ENCODE measurements at regions of chr1 and their contacts with region 1.

Region 1: DNA sequence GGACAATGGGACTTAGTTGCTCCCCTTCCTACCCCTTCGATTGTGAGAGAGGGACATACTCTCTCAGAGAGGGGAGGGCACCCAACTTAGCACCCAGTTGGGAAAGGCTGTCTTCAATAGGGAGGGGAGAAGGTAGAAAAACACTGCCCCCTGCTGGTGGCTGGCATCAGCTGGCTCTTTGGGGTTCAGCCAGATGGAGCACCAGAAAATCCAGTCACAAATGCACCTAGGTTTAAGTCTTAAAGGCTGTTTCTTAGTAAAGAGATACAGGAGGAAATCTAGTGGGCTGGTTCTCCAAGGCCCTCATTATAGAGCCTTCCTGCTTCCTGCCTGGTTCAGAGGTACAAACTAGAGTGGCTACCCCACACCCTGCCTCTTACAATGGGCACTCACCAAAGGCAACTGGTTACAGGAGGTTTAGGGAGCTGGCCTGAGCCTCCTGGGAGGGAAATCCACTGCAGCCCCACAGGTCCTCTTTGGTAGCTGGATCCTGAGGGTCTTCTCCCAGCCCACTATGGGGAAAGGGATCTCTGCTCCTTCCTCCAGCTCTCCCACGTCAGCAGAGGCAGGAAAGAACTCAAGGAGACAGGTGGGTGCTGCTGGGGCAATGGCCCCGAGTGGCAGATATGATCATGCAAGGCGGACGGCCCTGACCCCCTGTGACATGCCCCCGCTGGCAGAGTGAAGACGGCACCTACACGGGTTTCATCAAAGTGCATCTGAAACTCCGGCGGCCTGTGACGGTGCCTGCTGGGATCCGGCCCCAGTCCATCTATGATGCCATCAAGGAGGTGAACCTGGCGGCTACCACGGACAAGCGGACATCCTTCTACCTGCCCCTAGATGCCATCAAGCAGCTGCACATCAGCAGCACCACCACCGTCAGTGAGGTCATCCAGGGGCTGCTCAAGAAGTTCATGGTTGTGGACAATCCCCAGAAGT is 28.3 kb downstream of the EIF2D start:
- DNase-seq: peak; percentile 67
- ATAC-seq: no peak
- H3K4me3 Mint-ChIP-seq: peak overlapping the region; percentile 54
- H3K27ac Mint-ChIP-seq: peak overlapping the region; percentile 96
- H3K4me1 Mint-ChIP-seq: peaks cover 48% of the 10 kb centered on the region
- H3K27me3 Mint-ChIP-seq: no peaks in the 10 kb centered on the region
- CTCF ChIP-seq: peak; percentile 46

Region 2: GRCh38 chr1:206050655-206051235 is 533.2 kb before region 1 on chr1:
- CTCF ChIA-PET with region 1: no interaction called
- POLR2A ChIA-PET with region 1: no interaction called
- intact Hi-C with region 1: loop called (anchors 5 kb)
- DNase-seq: peak; percentile 71
- ATAC-seq: peak; percentile 86
- H3K4me3 Mint-ChIP-seq: peak overlapping the region; percentile 58
- H3K27ac Mint-ChIP-seq: peak overlapping the region; percentile 95
- H3K4me1 Mint-ChIP-seq: peaks cover 94% of the 10 kb centered on the region
- H3K27me3 Mint-ChIP-seq: no peaks in the 10 kb centered on the region
- CTCF ChIP-seq: no peak

Region 3: GRCh38 chr1:206479183-206480125 is 104.5 kb before region 1 on chr1:
- CTCF ChIA-PET with region 1: interaction called, 84 read pairs
- POLR2A ChIA-PET with region 1: interaction called, 3 read pairs
- intact Hi-C with region 1: loop called (anchors 1 kb)
- DNase-seq: no peak
- ATAC-seq: peak; percentile 74
- H3K4me3 Mint-ChIP-seq: no peak overlapping the region
- H3K27ac Mint-ChIP-seq: no peak overlapping the region
- H3K4me1 Mint-ChIP-seq: peaks cover 16% of the 10 kb centered on the region
- H3K27me3 Mint-ChIP-seq: no peaks in the 10 kb centered on the region
- CTCF ChIP-seq: peak; percentile 27

Region 4: DNA sequence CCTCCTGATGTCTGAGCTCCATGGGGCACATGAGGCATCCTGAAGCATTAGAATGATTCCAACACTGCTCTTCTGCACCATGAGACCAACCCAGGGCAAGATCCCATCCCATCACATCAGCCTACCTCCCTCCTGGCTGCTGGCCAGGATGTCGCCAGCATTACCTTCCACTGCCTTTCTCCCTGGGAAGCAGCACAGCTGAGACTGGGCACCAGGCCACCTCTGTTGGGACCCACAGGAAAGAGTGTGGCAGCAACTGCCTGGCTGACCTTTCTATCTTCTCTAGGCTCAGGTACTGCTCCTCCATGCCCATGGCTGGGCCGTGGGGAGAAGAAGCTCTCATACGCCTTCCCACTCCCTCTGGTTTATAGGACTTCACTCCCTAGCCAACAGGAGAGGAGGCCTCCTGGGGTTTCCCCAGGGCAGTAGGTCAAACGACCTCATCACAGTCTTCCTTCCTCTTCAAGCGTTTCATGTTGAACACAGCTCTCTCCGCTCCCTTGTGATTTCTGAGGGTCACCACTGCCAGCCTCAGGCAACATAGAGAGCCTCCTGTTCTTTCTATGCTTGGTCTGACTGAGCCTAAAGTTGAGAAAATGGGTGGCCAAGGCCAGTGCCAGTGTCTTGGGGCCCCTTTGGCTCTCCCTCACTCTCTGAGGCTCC is 87.7 kb before region 1 on chr1:
- CTCF ChIA-PET with region 1: interaction called, 42 read pairs
- POLR2A ChIA-PET with region 1: interaction called, 4 read pairs
- intact Hi-C with region 1: no loop called
- DNase-seq: peak; percentile 31
- ATAC-seq: peak; percentile 54
- H3K4me3 Mint-ChIP-seq: peak overlapping the region; percentile 58
- H3K27ac Mint-ChIP-seq: peak overlapping the region; percentile 84
- H3K4me1 Mint-ChIP-seq: peaks cover 44% of the 10 kb centered on the region
- H3K27me3 Mint-ChIP-seq: no peaks in the 10 kb centered on the region
- CTCF ChIP-seq: no peak

Region 5: GRCh38 chr1:206544562-206545257 is 39.3 kb before region 1 on chr1:
- CTCF ChIA-PET with region 1: interaction called, 349 read pairs
- POLR2A ChIA-PET with region 1: interaction called, 75 read pairs
- intact Hi-C with region 1: loop called (anchors 1 kb)
- DNase-seq: peak; percentile 81
- ATAC-seq: peak; percentile 93
- H3K4me3 Mint-ChIP-seq: no peak overlapping the region
- H3K27ac Mint-ChIP-seq: no peak overlapping the region
- H3K4me1 Mint-ChIP-seq: peaks cover 4% of the 10 kb centered on the region
- H3K27me3 Mint-ChIP-seq: no peaks in the 10 kb centered on the region
- CTCF ChIP-seq: peak; percentile 63

Region 6: GRCh38 chr1:206563367-206564207 is 20.4 kb before region 1 on chr1:
- CTCF ChIA-PET with region 1: interaction called, 132 read pairs
- POLR2A ChIA-PET with region 1: interaction called, 343 read pairs
- intact Hi-C with region 1: loop called (anchors 1 kb)
- DNase-seq: no peak
- ATAC-seq: peak; percentile 3
- H3K4me3 Mint-ChIP-seq: peak overlapping the region; percentile 63
- H3K27ac Mint-ChIP-seq: peak overlapping the region; percentile 73
- H3K4me1 Mint-ChIP-seq: peaks cover 98% of the 10 kb centered on the region
- H3K27me3 Mint-ChIP-seq: no peaks in the 10 kb centered on the region
- CTCF ChIP-seq: no peak

Region 7: DNA sequence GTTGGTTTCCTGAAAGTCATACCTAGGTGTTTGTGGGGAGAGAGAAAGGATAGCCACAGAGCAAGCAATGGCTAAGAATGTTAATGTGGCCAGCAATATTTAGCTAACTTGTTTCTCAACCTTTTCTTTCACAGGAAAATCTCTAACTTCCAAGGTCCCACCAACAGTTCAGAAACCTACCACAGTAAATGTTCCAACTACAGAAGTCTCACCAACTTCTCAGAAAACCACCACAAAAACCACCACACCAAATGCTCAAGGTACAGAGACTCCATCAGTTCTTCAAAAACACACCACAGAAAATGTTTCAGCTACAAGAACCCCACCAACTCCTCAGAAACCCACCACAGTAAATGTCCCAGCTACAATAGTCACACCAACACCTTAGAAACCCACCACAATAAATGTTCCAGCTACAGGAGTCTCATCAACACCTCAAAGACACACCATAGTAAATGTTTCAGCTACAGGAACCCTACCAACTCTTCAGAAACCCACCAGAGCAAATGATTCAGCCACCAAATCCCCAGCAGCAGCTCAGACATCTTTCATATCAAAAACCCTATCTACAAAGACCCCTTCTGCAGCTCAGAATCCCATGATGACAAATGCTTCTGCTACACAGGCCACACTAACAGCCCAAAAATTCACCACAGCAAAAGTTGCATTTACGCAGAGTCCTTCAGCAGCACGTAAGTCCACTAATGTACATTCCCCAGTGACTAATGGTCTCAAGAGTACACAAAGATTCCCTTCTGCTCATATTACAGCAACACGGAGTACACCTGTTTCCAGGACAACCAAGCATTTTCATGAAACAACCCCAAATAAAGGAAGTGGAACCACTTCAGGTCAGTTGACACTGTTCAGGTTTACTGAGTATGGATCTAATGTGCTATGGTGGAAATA is 752.8 kb after region 1 on chr1:
- CTCF ChIA-PET with region 1: no interaction called
- POLR2A ChIA-PET with region 1: no interaction called
- intact Hi-C with region 1: loop called (anchors 5 kb)
- DNase-seq: no peak
- ATAC-seq: peak; percentile 80
- H3K4me3 Mint-ChIP-seq: peak overlapping the region; percentile 73
- H3K27ac Mint-ChIP-seq: peak overlapping the region; percentile 98
- H3K4me1 Mint-ChIP-seq: peaks cover 82% of the 10 kb centered on the region
- H3K27me3 Mint-ChIP-seq: no peaks in the 10 kb centered on the region
- CTCF ChIP-seq: no peak